Activated CD4-positive, alpha-beta T cell treated with anti-CD3 and anti-CD28 coated beads for 36 hours (primary cell): ENCODE measurements at regions of chr2 and their contacts with region 1.

Region 1: GRCh38 chr2:156332534-156333273 is at the start of gene NR4A2:
- DNase-seq: peak; percentile 95
- ATAC-seq: peak; percentile 63
- H3K4me3 Mint-ChIP-seq: peak within 1 kb of the TSS; percentile 85
- H3K27ac Mint-ChIP-seq: peak within 1 kb of the TSS; percentile 94
- H3K4me1 Mint-ChIP-seq: peaks cover 46% of the 10 kb centered on the region
- H3K27me3 Mint-ChIP-seq: peaks cover 8% of the 10 kb centered on the region
- total RNA-seq, gene NR4A2: 19.1 to 23.0 TPM

Region 2: GRCh38 chr2:156322051-156322685 is 10.5 kb before region 1 on chr2:
- CTCF ChIA-PET with region 1: interaction called, 5 read pairs
- POLR2A ChIA-PET with region 1: interaction called, 3 read pairs
- intact Hi-C with region 1: loop called (anchors 1 kb)
- DNase-seq: peak; percentile 41
- ATAC-seq: peak; percentile 25
- H3K4me3 Mint-ChIP-seq: peak overlapping the region; percentile 63
- H3K27ac Mint-ChIP-seq: no peak overlapping the region
- H3K4me1 Mint-ChIP-seq: peaks cover 40% of the 10 kb centered on the region
- H3K27me3 Mint-ChIP-seq: peaks cover 64% of the 10 kb centered on the region

Region 3: DNA sequence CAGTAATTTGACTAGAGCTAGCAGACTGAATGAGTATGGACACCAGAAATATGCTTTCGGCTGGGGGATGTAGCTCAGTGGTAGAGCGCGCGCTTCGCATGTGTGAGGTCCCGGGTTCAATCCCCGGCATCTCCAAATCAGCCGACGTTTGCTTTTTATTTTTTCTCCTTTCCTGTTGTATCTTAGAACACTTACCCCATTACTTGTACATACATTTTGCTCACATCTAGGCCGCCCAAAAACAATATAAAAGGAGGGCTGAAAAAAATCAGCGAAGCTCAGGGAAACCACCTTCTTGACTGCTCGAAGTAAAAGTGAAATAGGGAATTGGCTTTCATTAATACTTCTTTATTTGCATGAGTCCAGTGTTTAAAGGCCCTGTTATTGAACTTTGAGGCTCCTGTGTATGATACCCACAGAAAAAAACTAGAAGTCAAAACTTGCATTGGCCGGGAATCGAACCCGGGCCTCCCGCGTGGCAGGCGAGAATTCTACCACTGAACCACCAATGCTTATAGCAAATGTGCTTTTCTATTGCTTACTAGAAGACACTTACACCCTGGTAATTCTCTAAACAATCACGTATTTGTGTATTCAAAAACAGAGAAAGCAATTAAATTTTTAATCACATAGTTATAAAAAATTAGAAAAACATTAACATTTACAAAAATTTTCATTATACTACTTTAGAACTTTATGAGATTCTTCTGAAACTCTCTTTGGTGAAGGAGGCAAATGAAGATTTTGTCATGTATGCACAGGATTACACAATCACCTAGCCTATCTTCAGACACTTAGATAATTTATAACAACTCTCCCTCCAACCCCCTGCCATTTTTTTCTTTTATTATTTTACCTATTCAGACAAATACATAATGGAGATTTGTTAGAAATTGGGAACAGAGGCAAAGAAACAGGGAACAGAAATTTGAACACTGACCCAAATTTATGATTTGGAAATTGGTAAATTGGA is 68.3 kb after region 1 on chr2:
- CTCF ChIA-PET with region 1: interaction called, 34 read pairs
- POLR2A ChIA-PET with region 1: interaction called, 21 read pairs
- intact Hi-C with region 1: loop called (anchors 1 kb)
- DNase-seq: peak; percentile 85
- ATAC-seq: peak; percentile 64
- H3K4me3 Mint-ChIP-seq: peak overlapping the region; percentile 85
- H3K27ac Mint-ChIP-seq: peak overlapping the region; percentile 95
- H3K4me1 Mint-ChIP-seq: peaks cover 43% of the 10 kb centered on the region
- H3K27me3 Mint-ChIP-seq: peaks cover 2% of the 10 kb centered on the region

Region 4: GRCh38 chr2:156589381-156590079 is 256.8 kb after region 1 on chr2:
- CTCF ChIA-PET with region 1: interaction called, 24 read pairs
- POLR2A ChIA-PET with region 1: interaction called, 4 read pairs
- intact Hi-C with region 1: loop called (anchors 1 kb)
- DNase-seq: peak; percentile 31
- ATAC-seq: no peak
- H3K4me3 Mint-ChIP-seq: no peak overlapping the region
- H3K27ac Mint-ChIP-seq: no peak overlapping the region
- H3K4me1 Mint-ChIP-seq: peaks cover 4% of the 10 kb centered on the region
- H3K27me3 Mint-ChIP-seq: no peaks in the 10 kb centered on the region

Region 5: DNA sequence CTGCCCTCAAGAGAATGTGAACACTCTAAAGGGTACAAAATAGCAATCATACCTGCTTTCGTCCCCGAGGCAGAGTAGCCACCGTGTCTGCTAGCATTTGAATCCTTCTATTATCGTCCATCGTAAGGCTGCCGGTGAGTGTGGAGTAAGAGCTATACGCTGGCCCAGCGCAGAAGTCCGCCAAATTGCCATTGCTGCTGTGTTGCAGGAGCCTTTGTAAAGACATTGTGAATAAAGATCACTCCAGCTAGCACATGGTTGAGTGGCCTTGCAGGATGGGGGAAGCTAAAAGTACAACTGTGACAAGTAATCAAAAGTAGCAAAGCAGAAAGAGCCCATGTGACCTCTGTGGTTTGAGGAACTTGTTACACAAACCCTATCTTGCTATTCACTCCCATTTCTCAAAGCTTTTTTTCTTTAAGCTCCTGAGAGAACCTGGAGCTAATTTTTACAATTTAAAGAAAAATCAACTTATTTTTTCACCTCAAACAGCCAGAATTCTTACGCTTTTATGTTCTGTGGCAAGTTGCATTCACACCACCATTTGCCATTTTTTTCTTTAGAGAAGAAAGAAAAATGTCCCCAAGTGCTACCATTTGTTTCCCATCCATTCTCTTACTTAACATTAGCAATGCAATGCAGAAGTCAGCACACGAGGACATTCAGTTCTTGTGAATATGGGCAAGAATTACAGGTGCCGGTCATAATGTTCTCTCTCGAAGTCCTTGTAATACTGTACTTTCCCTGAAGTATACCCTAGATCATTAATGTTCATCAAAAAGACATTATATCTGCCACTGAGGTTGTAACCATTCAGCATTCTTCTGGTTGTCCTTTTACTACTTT is 1111.3 kb after region 1 on chr2 and contains the start of gene CYTIP:
- CTCF ChIA-PET with region 1: no interaction called
- POLR2A ChIA-PET with region 1: interaction called, 7 read pairs
- intact Hi-C with region 1: loop called in 1 of 2 experiments (anchors 10 kb)
- DNase-seq: peak; percentile 82
- ATAC-seq: peak; percentile 44
- H3K4me3 Mint-ChIP-seq: peak within 1 kb of the TSS; percentile 93
- H3K27ac Mint-ChIP-seq: peak within 1 kb of the TSS; percentile 95
- H3K4me1 Mint-ChIP-seq: peaks cover 40% of the 10 kb centered on the region
- H3K27me3 Mint-ChIP-seq: no peaks in the 10 kb centered on the region
- total RNA-seq, gene CYTIP: 470 to 536 TPM